Thyroid gland (tissue), 4 donors: ENCODE measurements at regions of chr19 and their contacts with region 1.

Region 1: GRCh38 chr19:44576843-44577565 is 36.4 kb upstream of the IGSF23 start:
- DNase-seq: peak; percentile 32 to 53
- H3K4me3 ChIP-seq: no peak overlapping the region
- H3K27ac ChIP-seq: no peak overlapping the region
- H3K4me1 ChIP-seq: no peaks in the 10 kb centered on the region
- H3K27me3 ChIP-seq: no peaks in the 10 kb centered on the region
- CTCF ChIP-seq: peak in 5 of 6 experiments; percentile 20 to 73 (median 67)
- POLR2A ChIP-seq: no peak

Region 2: GRCh38 chr19:44657211-44657921 is 80.4 kb after region 1 on chr19:
- intact Hi-C with region 1: loop called (anchors 5 kb)
- DNase-seq: peak; percentile 58 to 63
- H3K4me3 ChIP-seq: no peak overlapping the region
- H3K27ac ChIP-seq: no peak overlapping the region
- H3K4me1 ChIP-seq: no peaks in the 10 kb centered on the region
- H3K27me3 ChIP-seq: no peaks in the 10 kb centered on the region
- CTCF ChIP-seq: peak; percentile 71 to 92 (median 86)
- POLR2A ChIP-seq: no peak